ENCODE measurements at regions of chr9 and their contacts with region 1.

Region 1: GRCh38 chr9:98118640-98119601 is at the start of gene TRIM14:
- DNase-seq: peak; percentile 81
- ATAC-seq: peak; percentile 72
- H3K4me3 Mint-ChIP-seq: peak within 1 kb of the TSS; percentile 91
- H3K27ac Mint-ChIP-seq: peak within 1 kb of the TSS; percentile 94
- H3K4me1 Mint-ChIP-seq: peaks cover 41% of the 10 kb centered on the region
- H3K27me3 Mint-ChIP-seq: no peaks in the 10 kb centered on the region
- total RNA-seq, gene TRIM14: 99.0 to 108 TPM

Region 2: GRCh38 chr9:98108531-98109031 is 10.3 kb before region 1 on chr9:
- POLR2A ChIA-PET with region 1: interaction called, 125 read pairs
- DNase-seq: peak; percentile 58
- ATAC-seq: peak; percentile 91
- H3K4me3 Mint-ChIP-seq: peak overlapping the region; percentile 70
- H3K27ac Mint-ChIP-seq: peak overlapping the region; percentile 98
- H3K4me1 Mint-ChIP-seq: peaks cover 72% of the 10 kb centered on the region
- H3K27me3 Mint-ChIP-seq: no peaks in the 10 kb centered on the region

Region 3: DNA sequence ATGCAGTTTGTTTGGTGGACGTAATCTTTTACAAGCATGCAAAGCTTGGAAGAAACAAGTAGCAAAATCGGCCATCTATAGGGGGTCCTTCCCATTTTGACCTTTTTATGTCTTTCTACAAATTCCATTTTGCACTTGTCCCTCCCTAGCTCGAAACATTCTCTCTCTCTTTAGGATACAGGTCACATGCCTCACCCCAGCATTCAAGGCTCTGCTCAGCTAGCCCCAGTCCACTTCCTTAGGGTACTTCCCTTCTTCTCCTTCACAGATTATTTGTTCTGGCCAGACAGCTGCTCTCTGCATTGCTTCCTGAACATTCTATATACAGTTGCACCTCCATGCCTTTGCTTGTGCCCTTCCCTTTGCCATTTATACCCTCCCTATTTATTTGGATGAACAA is 31.8 kb after region 1 on chr9:
- POLR2A ChIA-PET with region 1: no interaction called
- DNase-seq: no peak
- ATAC-seq: no peak
- H3K4me3 Mint-ChIP-seq: no peak overlapping the region
- H3K27ac Mint-ChIP-seq: no peak overlapping the region
- H3K4me1 Mint-ChIP-seq: peaks cover 3% of the 10 kb centered on the region
- H3K27me3 Mint-ChIP-seq: no peaks in the 10 kb centered on the region

Measured in activated naive CD8-positive, alpha-beta T cell treated with anti-CD3 and anti-CD28 coated beads, Interleukin-2, amount 10 ng/mL, durations not matched to agents 7 days and 5 days (primary cell).